CD8-positive, alpha-beta T cell (primary cell): ENCODE measurements at regions of chr1 and their contacts with region 1.

Region 1: DNA sequence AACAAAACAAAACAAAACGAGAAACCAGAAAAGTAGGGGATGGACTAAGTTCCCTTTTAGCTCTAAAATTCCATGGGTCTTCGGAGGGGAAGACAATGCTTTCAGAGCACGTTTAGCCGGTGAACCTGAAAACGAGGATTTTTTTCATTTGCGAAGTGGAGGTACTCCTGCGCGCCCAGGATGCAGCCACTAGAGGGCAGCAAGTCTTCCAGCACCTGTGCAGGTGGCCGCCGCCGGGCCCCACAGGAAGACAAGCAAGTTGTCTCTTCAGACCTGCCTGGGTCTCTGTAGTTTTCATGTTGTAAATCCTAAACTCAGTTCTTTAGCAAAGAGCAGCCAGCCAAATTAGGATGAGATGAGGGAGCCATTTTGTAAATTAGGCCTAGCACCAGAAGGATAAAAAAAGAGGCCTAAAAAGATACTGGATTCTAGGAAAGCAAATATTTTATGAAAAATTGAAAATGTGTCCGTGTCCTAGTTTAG is 17.7 kb upstream of the SNX27 start:
- DNase-seq: peak; percentile 72 to 91 (median 88)
- ATAC-seq: peak; percentile 99
- H3K4me3 ChIP-seq: no peak overlapping the region
- H3K4me3 Mint-ChIP-seq: peak overlapping the region; percentile 73
- H3K27ac ChIP-seq: no peak overlapping the region
- H3K27ac Mint-ChIP-seq: peak overlapping the region; percentile 56
- H3K4me1 ChIP-seq: peaks cover 6% of the 10 kb centered on the region
- H3K4me1 Mint-ChIP-seq: peaks cover 6% of the 10 kb centered on the region
- H3K27me3 ChIP-seq: no peaks in the 10 kb centered on the region
- H3K27me3 Mint-ChIP-seq: peaks cover 9% of the 10 kb centered on the region
- CTCF ChIP-seq: peak; percentile 93

Region 2: GRCh38 chr1:151443846-151444782 is 150.1 kb before region 1 on chr1:
- CTCF ChIA-PET with region 1: interaction called, 13 read pairs
- POLR2A ChIA-PET with region 1: no interaction called
- intact Hi-C with region 1: loop called (anchors 1 to 2 kb)
- DNase-seq: peak; percentile 40 to 86 (median 66)
- ATAC-seq: peak; percentile 100
- H3K4me3 ChIP-seq: no peak overlapping the region
- H3K4me3 Mint-ChIP-seq: no peak overlapping the region
- H3K27ac ChIP-seq: no peak overlapping the region
- H3K27ac Mint-ChIP-seq: no peak overlapping the region
- H3K4me1 ChIP-seq: peaks cover 6% of the 10 kb centered on the region
- H3K4me1 Mint-ChIP-seq: peaks cover 63% of the 10 kb centered on the region
- H3K27me3 ChIP-seq: no peaks in the 10 kb centered on the region
- H3K27me3 Mint-ChIP-seq: no peaks in the 10 kb centered on the region
- CTCF ChIP-seq: peak; percentile 83

Region 3: GRCh38 chr1:151579436-151579835 is 14.7 kb before region 1 on chr1:
- CTCF ChIA-PET with region 1: interaction called, 27 read pairs
- POLR2A ChIA-PET with region 1: interaction called, 3 read pairs
- intact Hi-C with region 1: no loop called
- DNase-seq: no peak
- ATAC-seq: no peak
- H3K4me3 ChIP-seq: no peak overlapping the region
- H3K4me3 Mint-ChIP-seq: no peak overlapping the region
- H3K27ac ChIP-seq: no peak overlapping the region
- H3K27ac Mint-ChIP-seq: no peak overlapping the region
- H3K4me1 ChIP-seq: no peaks in the 10 kb centered on the region
- H3K4me1 Mint-ChIP-seq: no peaks in the 10 kb centered on the region
- H3K27me3 ChIP-seq: no peaks in the 10 kb centered on the region
- H3K27me3 Mint-ChIP-seq: no peaks in the 10 kb centered on the region
- CTCF ChIP-seq: no peak

Region 4: GRCh38 chr1:151611832-151612500 is 17.8 kb after region 1 on chr1 and contains the start of gene SNX27:
- CTCF ChIA-PET with region 1: interaction called, 18 read pairs
- POLR2A ChIA-PET with region 1: interaction called, 6 read pairs
- intact Hi-C with region 1: loop called (anchors 1 kb)
- DNase-seq: peak; percentile 74 to 95 (median 87)
- ATAC-seq: peak; percentile 89
- H3K4me3 ChIP-seq: peak within 1 kb of the TSS; percentile 64 to 93
- H3K4me3 Mint-ChIP-seq: peak within 1 kb of the TSS; percentile 99
- H3K27ac ChIP-seq: peak within 1 kb of the TSS; percentile 54 to 59
- H3K27ac Mint-ChIP-seq: peak within 1 kb of the TSS; percentile 95
- H3K4me1 ChIP-seq: peaks cover 16% of the 10 kb centered on the region
- H3K4me1 Mint-ChIP-seq: peaks cover 38% of the 10 kb centered on the region
- H3K27me3 ChIP-seq: no peaks in the 10 kb centered on the region
- H3K27me3 Mint-ChIP-seq: peaks cover 4% of the 10 kb centered on the region
- CTCF ChIP-seq: no peak
- total RNA-seq, gene SNX27: 9.8 to 12.2 TPM

Region 5: GRCh38 chr1:151733134-151733533 is 138.9 kb after region 1 on chr1:
- CTCF ChIA-PET with region 1: interaction called, 38 read pairs
- POLR2A ChIA-PET with region 1: no interaction called
- intact Hi-C with region 1: loop called in 1 of 2 experiments (anchors 1 kb)
- DNase-seq: no peak
- ATAC-seq: no peak
- H3K4me3 ChIP-seq: no peak overlapping the region
- H3K4me3 Mint-ChIP-seq: no peak overlapping the region
- H3K27ac ChIP-seq: no peak overlapping the region
- H3K27ac Mint-ChIP-seq: no peak overlapping the region
- H3K4me1 ChIP-seq: no peaks in the 10 kb centered on the region
- H3K4me1 Mint-ChIP-seq: no peaks in the 10 kb centered on the region
- H3K27me3 ChIP-seq: peaks cover 0 to under 1% of the 10 kb centered on the region in 2 experiments
- H3K27me3 Mint-ChIP-seq: peaks cover 36% of the 10 kb centered on the region
- CTCF ChIP-seq: no peak

Region 6: DNA sequence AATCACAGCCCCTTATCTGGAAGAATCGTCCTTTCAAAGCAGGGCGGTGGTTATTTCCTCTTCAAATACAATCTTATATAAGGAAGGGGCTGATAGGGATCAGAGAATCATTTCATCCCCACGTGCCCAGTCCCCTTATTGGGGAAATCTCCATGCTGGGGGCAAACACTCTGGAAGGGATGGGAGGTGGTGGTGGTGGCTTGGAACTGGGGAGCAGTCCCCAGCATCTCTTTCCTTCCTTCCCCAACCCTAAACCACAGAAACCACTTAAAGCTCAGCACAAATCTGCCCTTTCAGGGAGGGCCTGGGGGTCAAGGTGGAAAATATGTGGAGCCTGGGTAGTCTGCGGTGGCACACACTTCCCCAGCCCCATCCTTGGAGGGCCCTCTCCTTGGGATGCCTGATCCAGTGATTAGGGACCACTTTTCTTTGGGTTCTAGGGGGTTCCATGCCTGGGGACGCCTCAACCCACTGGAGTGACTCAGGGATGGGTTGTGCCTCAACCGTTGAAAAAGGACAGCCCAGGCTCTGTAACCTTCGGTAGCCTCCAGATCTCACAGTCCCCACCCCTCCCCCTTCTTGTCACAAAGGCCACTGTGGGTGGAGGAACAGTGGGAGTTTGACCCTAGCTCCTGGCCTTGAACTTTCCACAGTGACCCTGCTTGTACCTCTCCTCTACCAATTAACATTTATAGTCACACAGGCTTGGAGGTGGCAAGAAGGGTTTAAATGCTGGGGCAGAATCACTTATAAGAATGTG is 239.9 kb after region 1 on chr1:
- CTCF ChIA-PET with region 1: interaction called, 32 read pairs
- POLR2A ChIA-PET with region 1: no interaction called
- intact Hi-C with region 1: loop called in 1 of 2 experiments (anchors 1 kb)
- DNase-seq: no peak
- ATAC-seq: no peak
- H3K4me3 ChIP-seq: no peak overlapping the region
- H3K4me3 Mint-ChIP-seq: no peak overlapping the region
- H3K27ac ChIP-seq: no peak overlapping the region
- H3K27ac Mint-ChIP-seq: peak overlapping the region; percentile 21
- H3K4me1 ChIP-seq: peaks cover 64% of the 10 kb centered on the region
- H3K4me1 Mint-ChIP-seq: peaks cover 71% of the 10 kb centered on the region
- H3K27me3 ChIP-seq: peaks cover 0 to 3% of the 10 kb centered on the region in 2 experiments
- H3K27me3 Mint-ChIP-seq: no peaks in the 10 kb centered on the region
- CTCF ChIP-seq: no peak

Region 7: GRCh38 chr1:151993654-151994496 is 399.7 kb after region 1 on chr1 and contains the start of gene S100A10:
- CTCF ChIA-PET with region 1: no interaction called
- POLR2A ChIA-PET with region 1: no interaction called
- intact Hi-C with region 1: loop called in 1 of 2 experiments (anchors 5 kb)
- DNase-seq: peak; percentile 58 to 92 (median 82)
- ATAC-seq: peak; percentile 86
- H3K4me3 ChIP-seq: peak within 1 kb of the TSS; percentile 78 to 94
- H3K4me3 Mint-ChIP-seq: peak within 1 kb of the TSS; percentile 98
- H3K27ac ChIP-seq: peak within 1 kb of the TSS; percentile 82 to 91
- H3K27ac Mint-ChIP-seq: peak within 1 kb of the TSS; percentile 97
- H3K4me1 ChIP-seq: peaks cover 48% of the 10 kb centered on the region
- H3K4me1 Mint-ChIP-seq: peaks cover 50% of the 10 kb centered on the region
- H3K27me3 ChIP-seq: no peaks in the 10 kb centered on the region
- H3K27me3 Mint-ChIP-seq: no peaks in the 10 kb centered on the region
- CTCF ChIP-seq: no peak
- total RNA-seq, gene S100A10: 132 to 138 TPM